Activated naive CD4-positive, alpha-beta T cell treated with anti-CD3 and anti-CD28 coated beads for 36 hours (primary cell): ENCODE measurements at regions of chr17 and their contacts with region 1.

Region 1: DNA sequence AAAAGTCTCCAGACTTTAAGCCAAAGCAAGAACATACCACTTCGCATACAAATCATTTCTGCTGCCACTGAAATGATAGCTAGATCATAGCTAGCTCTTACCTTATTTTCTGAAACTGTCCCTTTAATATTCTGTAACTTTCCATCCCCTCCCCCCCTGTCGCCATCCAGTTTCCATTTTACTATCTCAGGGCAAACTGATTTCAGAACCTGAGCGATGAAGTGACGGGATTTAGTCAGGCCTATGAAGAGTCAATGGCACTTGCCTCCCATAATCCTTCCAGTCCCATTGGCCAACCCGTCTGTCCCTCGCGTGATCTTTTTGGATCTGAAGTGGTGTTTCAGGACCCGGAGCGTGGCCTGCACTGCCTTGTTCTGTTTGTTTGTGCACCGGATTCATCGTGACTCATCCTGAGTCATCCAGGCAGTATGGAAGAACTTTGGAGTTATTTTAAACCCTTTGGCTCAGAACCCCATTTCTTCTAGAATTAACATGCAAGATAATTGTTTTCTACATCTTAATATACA is 199.8 kb upstream of the CHMP6 start:
- DNase-seq: peak; percentile 77
- H3K4me3 Mint-ChIP-seq: peak overlapping the region; percentile 58
- H3K27ac Mint-ChIP-seq: peak overlapping the region; percentile 94
- H3K4me1 Mint-ChIP-seq: peaks cover 87% of the 10 kb centered on the region
- H3K27me3 Mint-ChIP-seq: no peaks in the 10 kb centered on the region

Region 2: DNA sequence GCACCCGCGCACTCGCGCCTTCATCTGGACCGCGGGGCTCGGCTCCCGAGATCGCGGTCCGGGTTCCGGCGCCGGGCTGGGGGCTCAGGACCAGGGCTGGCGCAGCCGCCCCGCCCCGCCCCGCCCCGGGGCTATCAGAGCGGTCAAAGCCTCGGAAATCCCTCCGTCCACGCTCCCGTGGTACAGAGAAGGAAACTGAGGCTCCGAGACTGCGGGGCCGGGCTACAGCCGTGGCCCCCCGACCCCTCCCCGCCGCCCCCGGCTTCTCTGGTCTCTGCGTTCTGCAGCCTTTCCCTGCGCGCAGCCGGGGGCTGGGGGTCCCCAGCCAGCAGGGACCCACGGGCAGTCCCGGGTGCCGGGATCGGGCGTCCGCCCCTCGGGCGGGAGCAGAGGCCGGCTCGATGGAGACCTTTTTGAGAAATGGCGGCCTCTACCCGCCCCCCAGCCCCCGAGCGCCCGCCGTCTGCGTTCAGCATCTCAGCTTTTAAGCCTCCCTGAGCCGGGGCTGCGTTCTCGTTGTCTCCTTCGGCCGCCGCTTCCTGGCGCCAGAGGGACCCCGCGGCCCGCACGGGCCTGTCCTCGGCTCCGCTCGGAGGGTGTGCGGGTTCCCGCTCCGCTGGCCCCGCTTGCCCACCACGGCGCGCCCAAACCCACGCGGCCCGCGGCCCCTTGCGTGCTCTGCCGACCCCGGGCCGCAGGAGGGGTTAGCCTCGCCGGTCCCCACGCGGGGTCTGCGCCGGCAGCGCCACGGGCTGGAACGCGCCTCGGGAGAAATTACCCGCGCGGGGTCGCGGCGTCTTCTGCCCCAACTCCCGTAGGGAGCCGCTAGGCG is 314.0 kb before region 1 on chr17:
- CTCF ChIA-PET with region 1: no interaction called
- intact Hi-C with region 1: loop called (anchors 10 kb)
- DNase-seq: peak; percentile 65
- H3K4me3 Mint-ChIP-seq: no peak overlapping the region
- H3K27ac Mint-ChIP-seq: no peak overlapping the region
- H3K4me1 Mint-ChIP-seq: peaks cover 14% of the 10 kb centered on the region
- H3K27me3 Mint-ChIP-seq: peaks cover 59% of the 10 kb centered on the region

Region 3: GRCh38 chr17:80774643-80775281 is 17.1 kb before region 1 on chr17:
- CTCF ChIA-PET with region 1: interaction called, 4 read pairs
- intact Hi-C with region 1: loop called (anchors 2 kb)
- DNase-seq: peak; percentile 80
- H3K4me3 Mint-ChIP-seq: peak overlapping the region; percentile 66
- H3K27ac Mint-ChIP-seq: peak overlapping the region; percentile 89
- H3K4me1 Mint-ChIP-seq: peaks cover 73% of the 10 kb centered on the region
- H3K27me3 Mint-ChIP-seq: no peaks in the 10 kb centered on the region

Region 4: DNA sequence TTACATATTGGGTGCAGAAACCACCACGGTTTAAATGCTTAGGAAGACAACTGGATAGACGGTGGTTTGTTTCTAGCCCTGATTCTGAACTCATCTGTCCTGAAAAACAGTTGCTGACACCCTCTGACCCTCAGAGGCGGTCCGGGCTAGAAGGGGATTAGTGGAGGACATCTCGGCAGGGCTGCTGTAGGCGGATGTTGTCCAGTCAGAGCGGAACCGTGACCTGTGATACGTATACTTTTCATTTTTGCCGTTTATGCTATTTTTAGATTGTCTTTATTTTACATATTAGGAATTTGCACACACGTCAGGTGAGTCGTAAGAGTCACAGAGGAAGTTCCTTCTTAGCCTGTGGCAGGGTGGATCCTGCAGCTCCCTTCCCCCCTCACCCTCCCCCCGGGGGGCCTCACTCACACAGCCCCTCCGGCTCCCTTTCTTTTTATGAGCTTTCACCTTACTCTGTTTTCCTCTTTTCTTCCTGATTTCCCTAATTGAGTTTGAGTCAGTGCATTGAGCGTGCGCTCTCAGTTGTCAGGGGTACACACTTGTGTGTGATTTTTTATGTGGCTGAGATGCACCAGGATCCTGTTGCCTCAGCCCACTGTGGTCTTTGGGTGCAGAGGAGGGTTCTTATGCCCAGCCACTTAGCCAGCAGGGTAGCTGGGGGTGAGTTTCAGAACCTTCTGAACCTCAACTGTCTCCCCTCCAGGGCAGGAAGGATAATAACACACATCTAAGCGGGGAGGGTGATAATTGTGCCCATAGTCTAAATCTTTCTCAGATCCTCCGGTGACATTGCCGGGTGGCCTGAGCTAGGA is 11.2 kb before region 1 on chr17:
- CTCF ChIA-PET with region 1: interaction called, 9 read pairs
- intact Hi-C with region 1: loop called (anchors 1 kb)
- DNase-seq: peak; percentile 76
- H3K4me3 Mint-ChIP-seq: peak overlapping the region; percentile 76
- H3K27ac Mint-ChIP-seq: peak overlapping the region; percentile 98
- H3K4me1 Mint-ChIP-seq: peaks cover 79% of the 10 kb centered on the region
- H3K27me3 Mint-ChIP-seq: no peaks in the 10 kb centered on the region

Region 5: DNA sequence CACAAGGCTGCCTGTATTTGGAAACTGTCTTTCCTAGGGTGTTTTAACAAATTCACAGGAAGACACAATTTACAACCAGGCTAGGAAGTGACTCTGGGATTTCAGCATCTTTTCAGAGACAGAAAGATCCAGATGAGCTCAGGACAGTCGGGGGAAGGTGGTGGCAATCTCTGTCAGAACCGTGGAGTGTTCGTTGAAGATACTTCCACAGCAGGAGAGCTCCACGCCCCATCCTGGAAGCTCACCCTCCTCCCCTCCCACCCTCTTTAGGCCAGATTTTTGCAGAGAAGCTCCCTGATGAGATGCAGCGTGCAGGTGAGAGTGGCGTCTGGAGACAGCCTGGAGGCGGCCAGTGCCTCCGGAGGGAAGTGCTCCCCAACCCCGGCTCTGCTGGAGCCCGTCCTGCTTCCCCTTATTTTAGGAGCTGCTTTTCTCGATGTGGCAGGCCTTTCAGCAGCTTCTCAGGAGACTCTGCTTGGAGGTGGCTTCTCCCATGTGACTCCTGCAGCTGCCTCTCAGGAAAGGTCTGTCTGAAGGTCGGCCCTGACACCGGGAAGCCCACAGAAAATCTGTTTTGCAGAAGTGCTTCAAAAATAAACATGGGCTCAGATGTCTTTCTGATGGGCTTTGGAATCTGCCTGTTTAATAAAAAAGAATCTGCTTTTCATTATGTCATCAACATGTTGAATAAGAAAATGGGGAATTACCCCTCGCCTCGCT is 13.4 kb after region 1 on chr17:
- CTCF ChIA-PET with region 1: interaction called, 7 read pairs
- intact Hi-C with region 1: loop called (anchors 2 kb)
- DNase-seq: peak; percentile 7
- H3K4me3 Mint-ChIP-seq: no peak overlapping the region
- H3K27ac Mint-ChIP-seq: no peak overlapping the region
- H3K4me1 Mint-ChIP-seq: peaks cover 34% of the 10 kb centered on the region
- H3K27me3 Mint-ChIP-seq: no peaks in the 10 kb centered on the region

Region 6: GRCh38 chr17:80855948-80856862 is 64.4 kb after region 1 on chr17:
- CTCF ChIA-PET with region 1: interaction called, 3 read pairs
- intact Hi-C with region 1: loop called (anchors 1 kb)
- DNase-seq: peak; percentile 96
- H3K4me3 Mint-ChIP-seq: peak overlapping the region; percentile 9
- H3K27ac Mint-ChIP-seq: peak overlapping the region; percentile 94
- H3K4me1 Mint-ChIP-seq: peaks cover 75% of the 10 kb centered on the region
- H3K27me3 Mint-ChIP-seq: no peaks in the 10 kb centered on the region

Region 7: DNA sequence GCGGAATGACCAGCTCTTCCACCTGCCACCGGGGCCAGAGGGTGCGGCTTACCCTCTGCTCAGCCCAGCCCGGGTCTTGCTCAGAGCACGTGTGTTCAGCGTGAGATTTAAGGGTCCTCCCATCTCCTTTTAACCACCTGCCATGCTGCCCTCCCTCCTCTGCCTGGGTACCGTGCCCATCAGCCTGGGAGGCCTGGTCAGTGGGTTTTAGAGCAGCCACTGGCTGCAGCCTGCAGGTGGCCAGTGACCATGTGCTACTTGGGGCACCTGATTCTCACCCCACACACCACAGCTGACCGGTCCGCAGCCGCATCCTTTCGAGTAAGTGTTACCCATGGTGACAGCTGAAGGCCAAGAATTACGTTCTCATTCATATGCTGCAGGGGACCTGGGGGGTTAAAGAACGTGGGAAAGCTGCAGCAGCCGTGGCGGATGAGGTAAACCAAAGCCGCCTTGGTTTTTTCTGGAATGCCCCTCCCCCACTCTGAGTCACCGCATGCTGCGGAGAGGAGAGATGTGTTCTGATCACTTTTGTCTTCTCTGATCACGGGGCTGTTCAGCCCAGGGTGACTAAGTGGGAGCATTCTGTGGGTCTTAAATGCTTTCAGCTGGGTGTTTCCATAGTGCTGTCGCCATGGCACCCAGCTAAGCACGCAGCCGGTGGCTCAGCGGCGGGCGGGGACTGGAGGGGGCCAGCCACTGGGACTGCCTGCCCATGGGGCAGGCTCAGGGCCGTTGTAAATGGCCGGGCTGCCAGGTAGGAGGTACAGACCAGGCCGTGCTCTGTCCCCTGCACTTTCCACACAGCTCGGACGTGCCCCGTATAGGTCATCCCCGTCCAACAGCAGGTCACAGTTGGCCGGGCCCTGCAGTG is 302.9 kb after region 1 on chr17:
- CTCF ChIA-PET with region 1: no interaction called
- intact Hi-C with region 1: loop called (anchors 10 kb)
- DNase-seq: peak; percentile 97
- H3K4me3 Mint-ChIP-seq: no peak overlapping the region
- H3K27ac Mint-ChIP-seq: no peak overlapping the region
- H3K4me1 Mint-ChIP-seq: peaks cover 30% of the 10 kb centered on the region
- H3K27me3 Mint-ChIP-seq: no peaks in the 10 kb centered on the region